ENCODE measurements at regions of chr2 and their contacts with region 1.

Region 1: GRCh38 chr2:169462896-169463695 is 16.2 kb upstream of the BBS5 start:
- DNase-seq: no peak
- H3K4me3 Mint-ChIP-seq: no peak overlapping the region
- H3K27ac Mint-ChIP-seq: no peak overlapping the region
- H3K4me1 Mint-ChIP-seq: peaks cover 2% of the 10 kb centered on the region
- H3K27me3 Mint-ChIP-seq: peaks cover 3% of the 10 kb centered on the region

Region 2: DNA sequence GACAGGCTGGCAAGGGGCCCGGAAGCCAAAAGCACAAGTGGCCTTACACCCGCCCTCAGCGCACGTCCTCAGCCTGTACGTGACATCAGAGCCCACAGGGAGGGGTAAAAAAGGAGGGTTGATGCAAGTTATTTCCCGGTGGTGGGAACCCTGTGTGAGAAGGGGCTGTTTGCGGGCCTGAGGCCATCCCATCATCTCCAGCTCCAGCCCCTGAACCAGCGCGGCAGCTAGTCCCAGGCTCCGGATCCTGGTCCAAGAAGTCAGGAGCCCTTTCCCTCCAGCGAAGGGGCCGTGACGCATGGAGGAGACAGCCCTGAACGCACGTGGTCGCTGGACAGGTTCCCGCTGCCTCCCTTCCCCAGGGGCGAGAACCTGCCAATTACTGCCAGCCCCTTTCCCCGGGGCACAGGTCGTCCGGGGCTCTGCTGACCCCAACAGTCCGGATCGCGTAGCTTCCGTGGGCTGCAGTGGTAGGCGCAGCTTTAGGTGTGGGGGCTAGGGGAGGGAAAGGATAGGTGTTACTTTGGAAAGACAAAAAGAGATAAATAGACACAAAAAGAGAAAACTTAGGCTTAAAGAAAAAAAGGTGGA is 99.4 kb before region 1 on chr2:
- intact Hi-C with region 1: loop called (anchors 5 kb)
- DNase-seq: peak; percentile 43
- H3K4me3 Mint-ChIP-seq: peak overlapping the region; percentile 90
- H3K27ac Mint-ChIP-seq: peak overlapping the region; percentile 71
- H3K4me1 Mint-ChIP-seq: peaks cover 36% of the 10 kb centered on the region
- H3K27me3 Mint-ChIP-seq: peaks cover 49% of the 10 kb centered on the region

Region 3: DNA sequence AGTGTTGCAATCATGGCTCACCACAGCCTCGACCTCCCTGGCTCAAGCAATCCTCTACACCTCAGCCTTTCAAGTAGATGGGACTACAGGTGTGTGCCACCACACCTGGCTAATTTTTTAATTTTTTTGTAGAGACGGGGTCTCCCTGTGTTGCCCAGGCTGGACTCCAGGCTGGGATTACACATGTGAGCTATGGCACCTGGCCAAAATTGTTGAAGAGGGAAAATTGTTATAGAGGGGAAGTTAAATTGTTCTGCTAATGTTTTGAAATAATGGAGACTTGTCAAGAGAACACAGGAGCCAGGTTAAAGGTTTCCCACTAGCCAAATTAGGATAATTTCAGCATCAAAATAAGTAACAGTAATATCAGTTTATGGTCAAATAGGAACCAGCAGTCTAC is 146.2 kb after region 1 on chr2:
- intact Hi-C with region 1: no loop called
- DNase-seq: no peak
- H3K4me3 Mint-ChIP-seq: no peak overlapping the region
- H3K27ac Mint-ChIP-seq: no peak overlapping the region
- H3K4me1 Mint-ChIP-seq: peaks cover 2% of the 10 kb centered on the region
- H3K27me3 Mint-ChIP-seq: no peaks in the 10 kb centered on the region